ENCODE measurements at regions of chr10 and their contacts with region 1.

Region 1: GRCh38 chr10:6713716-6714115 is 133.6 kb upstream of the PRKCQ start:
- DNase-seq: no peak
- H3K4me3 ChIP-seq: no peak overlapping the region
- H3K27ac ChIP-seq: no peak overlapping the region
- H3K4me1 ChIP-seq: no peaks in the 10 kb centered on the region; a peak in 1 of 7 replicates
- H3K27me3 ChIP-seq: no peaks in the 10 kb centered on the region
- CTCF ChIP-seq: no peak
- EP300 ChIP-seq: no peak
- POLR2A ChIP-seq: no peak
- RAD21 ChIP-seq: no peak

Region 2: DNA sequence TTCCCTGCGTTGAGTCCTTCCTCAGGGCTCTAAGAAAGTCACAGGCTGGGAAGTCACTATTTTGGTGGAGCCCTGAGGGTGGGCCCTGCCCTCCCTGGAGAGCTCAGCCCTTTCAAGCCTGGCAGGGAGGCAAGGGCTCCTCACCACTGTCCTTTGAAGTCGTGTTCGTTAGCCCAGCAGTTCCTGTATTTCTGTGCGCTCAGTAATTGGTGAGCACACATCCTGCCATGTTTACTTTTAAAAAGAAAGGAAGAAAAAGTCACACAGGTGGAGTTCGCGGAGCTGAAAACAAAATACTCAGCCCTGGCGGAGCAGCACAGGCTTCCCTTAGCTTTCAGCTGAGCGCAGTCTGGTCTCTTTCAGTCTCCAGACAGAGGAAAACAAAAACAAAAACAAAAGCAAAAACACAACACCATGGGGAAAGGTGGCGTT is 170.7 kb before region 1 on chr10:
- CTCF ChIA-PET with region 1: no interaction called
- POLR2A ChIA-PET with region 1: no interaction called
- DNase-seq: no peak
- H3K4me3 ChIP-seq: no peak overlapping the region
- H3K27ac ChIP-seq: no peak overlapping the region
- H3K4me1 ChIP-seq: peaks cover 0 to 11% (median 4%) of the 10 kb centered on the region in 4 experiments; a peak in 6 of 7 replicates
- H3K27me3 ChIP-seq: no peaks in the 10 kb centered on the region
- CTCF ChIP-seq: no peak
- EP300 ChIP-seq: no peak
- POLR2A ChIP-seq: no peak
- RAD21 ChIP-seq: no peak

Region 3: DNA sequence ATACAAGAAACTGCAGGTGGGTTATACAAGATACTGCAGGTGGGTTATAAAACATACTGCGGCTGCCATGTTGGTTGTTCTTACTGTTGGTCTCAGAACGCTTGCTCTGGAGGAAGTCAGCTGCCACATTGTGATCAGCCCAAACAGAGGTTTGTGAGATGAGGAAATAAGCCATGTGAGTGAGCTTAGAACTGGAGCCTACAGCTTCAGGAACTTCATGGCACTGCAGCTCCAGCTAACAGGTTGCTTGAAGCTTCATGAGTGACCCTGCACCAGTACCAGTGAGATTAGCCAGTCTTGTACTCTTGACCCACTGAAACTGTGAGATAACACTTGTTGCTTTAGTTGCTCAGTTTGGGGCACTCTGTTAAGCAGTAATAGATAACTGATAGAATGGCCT is 59.1 kb before region 1 on chr10:
- CTCF ChIA-PET with region 1: no interaction called
- POLR2A ChIA-PET with region 1: no interaction called
- DNase-seq: no peak
- H3K4me3 ChIP-seq: no peak overlapping the region
- H3K27ac ChIP-seq: no peak overlapping the region
- H3K4me1 ChIP-seq: peaks cover 0 to 6% (median 2%) of the 10 kb centered on the region in 4 experiments; a peak in 2 of 7 replicates
- H3K27me3 ChIP-seq: no peaks in the 10 kb centered on the region
- CTCF ChIP-seq: no peak
- EP300 ChIP-seq: no peak
- POLR2A ChIP-seq: no peak
- RAD21 ChIP-seq: no peak

Region 4: DNA sequence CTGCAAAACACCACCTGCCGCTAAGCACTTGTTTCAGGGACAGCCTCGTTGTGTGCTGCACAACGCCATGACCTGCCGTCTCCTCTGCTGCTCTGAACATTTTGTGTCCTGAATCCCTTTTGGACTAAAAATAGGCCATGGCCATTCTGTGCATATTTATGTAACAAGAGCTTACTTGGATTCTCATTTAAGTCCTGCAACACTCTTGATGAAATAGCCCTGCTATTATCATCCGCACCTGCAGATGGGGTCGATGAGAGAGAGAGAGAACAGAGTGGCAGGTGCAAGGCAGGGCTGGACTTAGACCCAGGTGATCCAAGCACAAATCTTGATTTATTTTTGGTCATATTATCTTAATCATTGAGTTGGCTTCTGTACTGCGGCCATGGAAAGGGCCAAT is 12.4 kb before region 1 on chr10:
- CTCF ChIA-PET with region 1: interaction called, 28 read pairs
- POLR2A ChIA-PET with region 1: no interaction called
- DNase-seq: peak in 1 of 2 experiments; percentile 60
- H3K4me3 ChIP-seq: no peak overlapping the region
- H3K27ac ChIP-seq: no peak overlapping the region
- H3K4me1 ChIP-seq: no peaks in the 10 kb centered on the region
- H3K27me3 ChIP-seq: no peaks in the 10 kb centered on the region
- CTCF ChIP-seq: peak; percentile 37 to 59 (median 39)
- EP300 ChIP-seq: no peak
- POLR2A ChIP-seq: no peak
- RAD21 ChIP-seq: peak; percentile 62 to 73

Measured in H1 (cell line).